Activated CD8-positive, alpha-beta memory T cell treated with anti-CD3 and anti-CD28 coated beads, Interleukin-2, amount 10 ng/mL, durations not matched to agents 7 days and 5 days (primary cell): ENCODE measurements at regions of chr19 and their contacts with region 1.

Region 1: GRCh38 chr19:7680606-7681339 is at the start of gene TRAPPC5:
- DNase-seq: peak; percentile 88
- ATAC-seq: peak; percentile 81
- H3K4me3 Mint-ChIP-seq: peak within 1 kb of the TSS; percentile 83
- H3K27ac Mint-ChIP-seq: peak within 1 kb of the TSS; percentile 88
- H3K4me1 Mint-ChIP-seq: peaks cover 34% of the 10 kb centered on the region
- H3K27me3 Mint-ChIP-seq: peaks cover 22% of the 10 kb centered on the region
- total RNA-seq, gene TRAPPC5: 80.1 to 91.0 TPM

Region 2: GRCh38 chr19:7629347-7630054 is 51.3 kb before region 1 on chr19 and contains the starts of genes PET100 and XAB2:
- CTCF ChIA-PET with region 1: interaction called, 12 read pairs
- DNase-seq: peak; percentile 98
- ATAC-seq: peak; percentile 99
- H3K4me3 Mint-ChIP-seq: peak within 1 kb of the TSS; percentile 97
- H3K27ac Mint-ChIP-seq: peak within 1 kb of the TSS; percentile 99
- H3K4me1 Mint-ChIP-seq: peaks cover 33% of the 10 kb centered on the region
- H3K27me3 Mint-ChIP-seq: no peaks in the 10 kb centered on the region
- total RNA-seq, gene PET100: 132 to 163 TPM
- total RNA-seq, gene XAB2: 43.7 to 51.5 TPM

Region 3: DNA sequence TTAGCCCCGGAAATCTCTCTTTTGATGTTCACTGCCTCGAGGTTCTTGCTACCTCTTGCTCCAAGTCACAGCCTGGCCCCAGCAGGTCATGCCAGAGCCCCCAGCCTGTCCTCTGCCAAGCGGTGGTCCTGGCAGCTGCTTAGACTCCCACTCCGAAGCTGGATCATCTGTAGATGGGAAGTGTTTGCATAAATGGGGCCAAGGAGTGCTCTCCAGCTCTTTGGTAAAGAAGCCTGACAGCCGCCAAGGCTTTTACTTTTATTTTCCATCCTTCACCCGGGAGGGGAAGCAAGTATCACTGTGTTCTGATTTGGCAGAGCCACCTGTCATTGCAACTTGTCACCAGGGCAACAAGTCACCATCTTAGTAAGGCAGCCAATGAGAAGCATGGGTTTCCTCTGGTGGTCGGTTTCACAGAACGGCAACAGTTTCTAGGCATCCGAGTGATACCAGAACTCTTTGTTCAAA is 22.5 kb before region 1 on chr19:
- CTCF ChIA-PET with region 1: interaction called, 38 read pairs
- DNase-seq: peak; percentile 74
- ATAC-seq: peak; percentile 93
- H3K4me3 Mint-ChIP-seq: peak overlapping the region; percentile 70
- H3K27ac Mint-ChIP-seq: peak overlapping the region; percentile 73
- H3K4me1 Mint-ChIP-seq: peaks cover 20% of the 10 kb centered on the region
- H3K27me3 Mint-ChIP-seq: no peaks in the 10 kb centered on the region

Region 4: DNA sequence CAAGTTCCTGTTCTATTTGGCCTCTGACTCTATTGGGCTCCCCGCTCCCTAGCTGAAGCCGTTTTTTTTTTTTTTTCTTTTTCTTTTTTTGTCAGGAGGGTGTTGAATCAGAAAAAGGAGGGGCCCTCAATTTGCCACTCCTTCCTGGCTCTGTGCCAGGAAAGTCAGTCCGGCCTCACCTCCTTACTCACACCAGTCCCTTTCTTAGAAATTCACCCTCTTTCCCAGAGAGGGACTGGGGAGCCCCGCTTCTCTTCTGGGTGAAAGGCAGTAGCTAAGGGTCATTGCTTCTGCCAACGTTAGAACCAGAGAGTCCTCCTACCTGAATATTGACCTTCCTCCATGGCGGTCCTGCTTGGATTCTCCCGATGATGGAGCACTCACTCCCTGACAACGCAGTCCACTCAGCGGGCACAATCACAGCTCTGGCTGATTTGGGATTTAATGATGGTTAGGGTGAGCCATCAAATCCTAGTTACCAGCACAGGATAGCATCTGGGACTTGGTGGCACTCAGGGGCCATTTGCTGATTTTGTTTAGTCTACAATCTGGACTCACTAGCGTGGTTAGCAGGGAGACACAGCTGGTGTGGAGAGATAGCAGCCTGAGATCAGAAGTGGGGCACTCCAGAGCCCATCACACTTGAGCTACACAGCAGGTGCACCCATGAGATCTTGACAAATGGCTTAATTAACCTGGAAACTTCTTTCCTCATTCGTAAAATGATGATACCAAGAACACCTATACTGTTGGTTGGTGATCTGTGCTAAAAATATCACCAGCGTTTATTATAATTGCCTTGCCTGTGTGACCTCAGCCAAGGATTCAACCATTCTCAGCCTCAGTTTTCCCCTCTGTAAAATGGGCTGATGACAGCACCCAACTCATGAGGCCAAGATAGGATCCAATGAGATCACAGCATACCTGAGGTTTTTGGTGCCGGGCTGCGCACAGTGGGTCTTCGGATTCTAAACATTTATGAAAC is 18.9 kb after region 1 on chr19:
- CTCF ChIA-PET with region 1: interaction called, 11 read pairs
- DNase-seq: no peak
- ATAC-seq: no peak
- H3K4me3 Mint-ChIP-seq: no peak overlapping the region
- H3K27ac Mint-ChIP-seq: no peak overlapping the region
- H3K4me1 Mint-ChIP-seq: peaks cover 7% of the 10 kb centered on the region
- H3K27me3 Mint-ChIP-seq: peaks cover 26% of the 10 kb centered on the region

Region 5: GRCh38 chr19:7868676-7869452 is 188.1 kb after region 1 on chr19:
- CTCF ChIA-PET with region 1: interaction called, 10 read pairs
- DNase-seq: peak; percentile 84
- ATAC-seq: peak; percentile 81
- H3K4me3 Mint-ChIP-seq: peak overlapping the region; percentile 60
- H3K27ac Mint-ChIP-seq: peak overlapping the region; percentile 28
- H3K4me1 Mint-ChIP-seq: peaks cover 37% of the 10 kb centered on the region
- H3K27me3 Mint-ChIP-seq: peaks cover 60% of the 10 kb centered on the region